RWPE1 (cell line): ENCODE measurements at regions of chr3 and their contacts with region 1.

Region 1: DNA sequence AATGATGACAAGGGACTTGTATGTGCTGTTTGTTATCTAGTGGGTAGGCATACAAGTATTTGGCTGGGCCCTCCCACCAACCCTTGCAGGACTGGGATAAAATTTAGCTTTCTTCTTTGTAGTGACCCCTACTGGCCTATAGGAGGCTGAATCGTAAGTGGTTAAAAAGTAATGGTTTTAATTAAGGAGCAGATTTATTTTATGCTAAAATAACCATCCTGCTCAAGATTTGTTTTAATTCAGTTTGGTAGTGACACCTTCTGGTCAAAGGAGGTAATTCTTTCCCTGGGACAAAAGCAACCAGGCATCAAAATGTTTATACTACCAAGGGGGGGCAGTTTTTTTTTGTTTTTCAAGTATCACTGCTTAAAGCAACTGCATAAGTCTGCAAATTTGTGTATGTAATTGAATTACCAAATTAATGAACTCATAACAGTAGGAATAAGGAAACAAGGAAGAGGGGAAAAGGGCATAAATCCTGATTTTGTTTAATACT is 70.7 kb downstream of the TOP2B start:
- DNase-seq: peak; percentile 5
- H3K27ac ChIP-seq: no peak overlapping the region
- CTCF ChIP-seq: peak; percentile 74

Region 2: DNA sequence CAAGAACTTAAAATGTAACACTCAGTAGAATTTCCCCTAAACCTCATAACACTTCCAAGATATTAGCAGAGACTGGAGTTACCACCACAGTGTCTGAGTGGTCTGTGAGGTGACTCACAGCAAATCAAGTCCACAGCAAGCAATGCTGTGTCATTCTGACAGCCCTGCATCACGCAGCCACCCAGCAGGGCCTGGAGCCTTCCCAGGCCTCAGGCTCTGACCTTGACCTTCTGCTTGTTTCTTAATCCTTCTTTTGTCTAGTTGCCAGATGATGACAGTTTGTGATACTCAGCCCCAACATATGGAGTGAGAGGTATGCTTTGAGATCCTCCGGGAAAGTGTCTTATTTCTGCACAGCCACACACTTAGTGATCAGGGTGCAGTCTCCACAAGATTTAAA is 11.8 kb before region 1 on chr3:
- CTCF ChIA-PET with region 1: no interaction called
- POLR2A ChIA-PET with region 1: no interaction called
- DNase-seq: peak; percentile 51
- H3K27ac ChIP-seq: no peak overlapping the region
- CTCF ChIP-seq: no peak

Region 3: DNA sequence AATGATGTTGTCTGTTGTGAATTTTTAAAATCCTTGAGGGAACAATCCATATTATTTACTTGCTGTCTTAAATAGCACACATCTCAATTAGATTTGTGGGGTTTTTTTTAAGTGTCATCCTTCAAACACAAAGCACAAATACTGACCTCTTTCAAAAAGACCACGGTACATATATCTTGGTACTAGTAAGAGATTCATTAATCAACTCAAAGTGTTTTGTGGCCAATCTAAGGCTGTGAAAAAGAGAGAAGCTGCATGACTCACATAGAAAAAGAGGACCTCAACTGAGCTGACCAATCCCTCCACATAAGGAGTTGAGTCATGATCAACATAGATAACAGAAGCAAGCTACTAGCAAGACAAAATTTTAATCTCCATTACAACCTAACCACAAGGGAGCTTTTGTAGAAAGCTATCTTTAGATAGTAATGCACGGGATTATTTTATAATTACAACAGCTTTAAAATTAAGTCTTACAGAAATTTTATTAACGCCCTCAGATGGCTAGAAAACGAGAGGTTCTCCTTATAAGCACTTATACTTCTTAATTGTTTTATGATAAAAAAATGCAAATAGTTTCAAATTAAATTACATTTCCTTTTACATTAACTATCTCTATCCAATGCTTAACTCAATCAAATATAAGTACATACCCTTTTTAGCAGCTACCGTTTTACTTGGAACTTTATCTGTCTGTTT is 10.2 kb after region 1 on chr3:
- CTCF ChIA-PET with region 1: no interaction called
- POLR2A ChIA-PET with region 1: interaction called, 13 read pairs
- DNase-seq: peak; percentile 7
- H3K27ac ChIP-seq: no peak overlapping the region
- CTCF ChIP-seq: no peak

Region 4: DNA sequence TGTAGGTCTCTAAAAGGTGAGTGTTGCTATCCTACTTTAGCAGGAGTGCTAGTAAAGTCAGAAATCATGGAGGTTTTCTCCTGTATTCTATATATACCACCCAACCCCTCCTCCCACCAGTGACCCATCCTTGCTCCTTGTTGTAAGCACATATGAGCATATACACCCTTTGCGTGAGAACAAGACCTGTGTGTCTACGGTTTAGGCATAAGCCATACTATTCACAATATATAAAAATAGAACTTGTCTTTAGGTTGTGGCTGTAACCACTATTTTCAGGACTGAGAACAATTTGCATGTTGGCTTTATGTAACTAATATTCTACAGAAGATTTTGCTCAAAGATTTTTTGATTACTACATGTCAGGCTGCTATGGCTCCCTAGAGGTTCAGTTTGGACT is 129.7 kb after region 1 on chr3:
- CTCF ChIA-PET with region 1: no interaction called
- POLR2A ChIA-PET with region 1: no interaction called
- DNase-seq: no peak
- H3K27ac ChIP-seq: no peak overlapping the region
- CTCF ChIP-seq: no peak